CD4-positive, alpha-beta memory T cell (primary cell): ENCODE measurements at regions of chr5 and their contacts with region 1.

Region 1: DNA sequence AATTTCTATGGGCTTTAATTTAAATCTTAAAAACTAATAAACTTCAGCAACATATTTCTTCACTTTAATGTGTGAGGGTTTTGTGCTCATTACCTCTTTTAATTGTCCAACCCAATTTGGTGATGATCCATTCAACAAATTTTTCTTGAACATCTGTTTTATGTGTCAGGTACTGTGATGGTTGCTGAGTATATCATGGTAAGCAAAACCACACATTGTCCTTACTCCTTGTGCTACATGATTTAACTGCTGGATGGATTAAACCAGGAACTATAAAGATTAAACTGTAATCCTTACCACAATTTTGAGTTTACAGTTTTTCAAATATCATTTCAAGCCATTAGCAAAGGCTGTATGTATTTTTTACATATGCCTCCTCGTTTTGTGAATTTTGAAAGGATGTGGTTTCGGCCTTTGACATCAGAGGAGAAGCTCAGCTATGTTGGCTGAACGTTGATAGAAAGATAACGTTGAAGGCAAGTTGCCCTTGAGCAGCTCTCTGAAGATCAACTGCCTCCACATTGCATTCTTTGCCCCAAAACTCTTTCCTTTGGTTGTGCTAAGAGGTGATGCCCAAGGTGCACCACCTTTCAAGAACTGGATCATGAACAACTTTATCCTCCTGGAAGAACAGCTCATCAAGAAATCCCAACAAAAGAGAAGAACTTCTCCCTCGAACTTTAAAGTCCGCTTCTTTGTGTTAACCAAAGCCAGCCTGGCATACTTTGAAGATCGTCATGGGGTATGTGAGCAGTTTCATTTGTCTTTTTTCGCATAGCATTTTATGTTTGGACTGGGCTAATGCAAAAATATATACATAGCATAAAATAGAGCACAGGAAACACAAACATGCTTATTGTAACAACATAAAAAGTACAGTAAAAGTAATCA is at the start of gene ITK:
- DNase-seq: peak; percentile 77 to 85 (median 81)
- H3K4me3 ChIP-seq: peak within 1 kb of the TSS; percentile 83 to 99
- H3K4me3 Mint-ChIP-seq: peak within 1 kb of the TSS; percentile 97 to 100 (median 99)
- H3K27ac ChIP-seq: peak within 1 kb of the TSS; percentile 77
- H3K27ac Mint-ChIP-seq: peak within 1 kb of the TSS; percentile 84 to 99 (median 97)
- H3K4me1 ChIP-seq: peaks cover 47% of the 10 kb centered on the region
- H3K4me1 Mint-ChIP-seq: peaks cover 28 to 67% (median 43%) of the 10 kb centered on the region in 4 donors
- H3K27me3 ChIP-seq: no peaks in the 10 kb centered on the region
- H3K27me3 Mint-ChIP-seq: no peaks in the 10 kb centered on the region
- total RNA-seq, gene ITK: 398 to 421 TPM

Region 2: GRCh38 chr5:155794795-155795194 is 1385.8 kb before region 1 on chr5:
- CTCF ChIA-PET with region 1: no interaction called
- POLR2A ChIA-PET with region 1: no interaction called
- intact Hi-C with region 1: no loop called
- DNase-seq: no peak
- H3K4me3 ChIP-seq: no peak overlapping the region
- H3K4me3 Mint-ChIP-seq: no peak overlapping the region
- H3K27ac ChIP-seq: no peak overlapping the region
- H3K27ac Mint-ChIP-seq: no peak overlapping the region
- H3K4me1 ChIP-seq: no peaks in the 10 kb centered on the region
- H3K4me1 Mint-ChIP-seq: no peaks in the 10 kb centered on the region
- H3K27me3 ChIP-seq: no peaks in the 10 kb centered on the region
- H3K27me3 Mint-ChIP-seq: no peaks in the 10 kb centered on the region

Region 3: GRCh38 chr5:156835905-156836304 is 344.7 kb before region 1 on chr5:
- CTCF ChIA-PET with region 1: no interaction called
- POLR2A ChIA-PET with region 1: no interaction called
- intact Hi-C with region 1: no loop called
- DNase-seq: no peak
- H3K4me3 ChIP-seq: no peak overlapping the region
- H3K4me3 Mint-ChIP-seq: no peak overlapping the region
- H3K27ac ChIP-seq: no peak overlapping the region
- H3K27ac Mint-ChIP-seq: peak overlapping the region in 1 of 7 donors; percentile 4
- H3K4me1 ChIP-seq: no peaks in the 10 kb centered on the region
- H3K4me1 Mint-ChIP-seq: no peaks in the 10 kb centered on the region
- H3K27me3 ChIP-seq: no peaks in the 10 kb centered on the region
- H3K27me3 Mint-ChIP-seq: peaks cover 1 to 3% of the 10 kb centered on the region in 2 donors

Region 4: GRCh38 chr5:157108976-157109375 is 71.6 kb before region 1 on chr5 and contains the start of gene HAVCR2:
- CTCF ChIA-PET with region 1: no interaction called
- POLR2A ChIA-PET with region 1: no interaction called
- intact Hi-C with region 1: no loop called
- DNase-seq: peak; percentile 47 to 63 (median 54)
- H3K4me3 ChIP-seq: peak within 1 kb of the TSS; percentile 7 to 25
- H3K4me3 Mint-ChIP-seq: peak within 1 kb of the TSS; percentile 72 to 90 (median 86)
- H3K27ac ChIP-seq: peak within 1 kb of the TSS; percentile 12
- H3K27ac Mint-ChIP-seq: peak within 1 kb of the TSS; percentile 75 to 96 (median 92)
- H3K4me1 ChIP-seq: peaks cover 27% of the 10 kb centered on the region
- H3K4me1 Mint-ChIP-seq: peaks cover 20 to 49% (median 31%) of the 10 kb centered on the region in 4 donors
- H3K27me3 ChIP-seq: no peaks in the 10 kb centered on the region
- H3K27me3 Mint-ChIP-seq: no peaks in the 10 kb centered on the region
- total RNA-seq, gene HAVCR2: 2.7 to 4.5 TPM

Region 5: GRCh38 chr5:157159209-157159751 is 21.3 kb before region 1 on chr5:
- CTCF ChIA-PET with region 1: interaction called, 12 read pairs
- POLR2A ChIA-PET with region 1: interaction called, 171 read pairs
- intact Hi-C with region 1: loop called (anchors 1 kb)
- DNase-seq: peak; percentile 74 to 87 (median 81)
- H3K4me3 ChIP-seq: peak overlapping the region in 1 of 2 donors; percentile 31
- H3K4me3 Mint-ChIP-seq: peak overlapping the region in 7 of 8 donors; percentile 51 to 75 (median 65)
- H3K27ac ChIP-seq: peak overlapping the region; percentile 88
- H3K27ac Mint-ChIP-seq: peak overlapping the region; percentile 91 to 99 (median 98)
- H3K4me1 ChIP-seq: peaks cover 74% of the 10 kb centered on the region
- H3K4me1 Mint-ChIP-seq: peaks cover 57 to 91% (median 73%) of the 10 kb centered on the region in 4 donors
- H3K27me3 ChIP-seq: no peaks in the 10 kb centered on the region
- H3K27me3 Mint-ChIP-seq: no peaks in the 10 kb centered on the region

Region 6: DNA sequence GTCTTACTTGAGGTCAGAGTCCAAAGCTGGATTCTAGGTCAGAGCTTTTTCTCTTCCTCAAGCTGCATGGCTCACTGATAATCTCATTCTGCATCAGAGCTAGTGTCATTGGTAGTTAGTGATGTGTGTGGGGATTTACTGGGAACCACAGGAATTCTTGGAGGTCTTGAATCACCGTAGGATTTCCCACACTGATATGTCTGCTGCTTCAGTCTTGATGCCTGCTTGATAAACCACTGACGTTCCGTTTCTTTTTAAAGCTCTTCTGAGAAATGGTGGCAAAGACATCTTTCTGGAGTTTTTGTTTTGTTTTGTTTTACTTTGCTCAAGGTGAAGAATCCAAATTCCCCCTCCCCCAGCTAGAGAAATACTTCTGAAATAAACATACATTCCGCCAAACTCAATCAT is 13.4 kb before region 1 on chr5:
- CTCF ChIA-PET with region 1: interaction called, 14 read pairs
- POLR2A ChIA-PET with region 1: interaction called, 171 read pairs
- intact Hi-C with region 1: loop called (anchors 1 kb)
- DNase-seq: no peak
- H3K4me3 ChIP-seq: peak overlapping the region in 1 of 2 donors; percentile 12
- H3K4me3 Mint-ChIP-seq: peak overlapping the region; percentile 4 to 85 (median 67)
- H3K27ac ChIP-seq: peak overlapping the region; percentile 56
- H3K27ac Mint-ChIP-seq: peak overlapping the region; percentile 71 to 95 (median 80)
- H3K4me1 ChIP-seq: peaks cover 42% of the 10 kb centered on the region
- H3K4me1 Mint-ChIP-seq: peaks cover 42 to 85% (median 58%) of the 10 kb centered on the region in 4 donors
- H3K27me3 ChIP-seq: no peaks in the 10 kb centered on the region
- H3K27me3 Mint-ChIP-seq: no peaks in the 10 kb centered on the region

Region 7: GRCh38 chr5:157198277-157198986 is 17.8 kb after region 1 on chr5:
- CTCF ChIA-PET with region 1: interaction called, 6 read pairs
- POLR2A ChIA-PET with region 1: interaction called, 1,020 read pairs
- intact Hi-C with region 1: loop called (anchors 1 kb)
- DNase-seq: peak in 1 of 5 donors; percentile 91
- H3K4me3 ChIP-seq: peak overlapping the region in 1 of 2 donors; percentile 19
- H3K4me3 Mint-ChIP-seq: peak overlapping the region; percentile 68 to 86 (median 72)
- H3K27ac ChIP-seq: peak overlapping the region; percentile 64
- H3K27ac Mint-ChIP-seq: peak overlapping the region; percentile 84 to 96 (median 92)
- H3K4me1 ChIP-seq: peaks cover 99% of the 10 kb centered on the region
- H3K4me1 Mint-ChIP-seq: peaks cover 73 to 96% (median 84%) of the 10 kb centered on the region in 4 donors
- H3K27me3 ChIP-seq: no peaks in the 10 kb centered on the region
- H3K27me3 Mint-ChIP-seq: no peaks in the 10 kb centered on the region

Region 8: DNA sequence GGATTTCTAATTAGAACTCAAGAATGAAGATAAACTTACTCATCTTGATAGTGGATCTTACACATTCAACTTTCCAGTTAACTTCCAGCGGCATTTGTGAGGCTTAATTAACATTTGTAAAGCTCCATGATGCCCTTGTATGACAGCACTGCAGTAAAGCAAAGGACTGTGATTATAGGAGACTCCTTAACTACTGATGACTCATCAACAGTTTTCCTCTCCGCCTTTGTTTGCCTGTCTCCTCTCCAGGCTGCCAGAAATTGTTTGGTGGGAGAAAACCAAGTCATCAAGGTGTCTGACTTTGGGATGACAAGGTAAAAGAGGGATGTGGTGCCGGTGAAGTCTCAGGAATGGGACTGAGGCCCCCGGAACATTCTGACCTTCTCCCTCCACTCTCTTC is 64.9 kb after region 1 on chr5:
- CTCF ChIA-PET with region 1: interaction called, 4 read pairs
- POLR2A ChIA-PET with region 1: interaction called, 123 read pairs
- intact Hi-C with region 1: loop called (anchors 2 kb)
- DNase-seq: no peak
- H3K4me3 ChIP-seq: no peak overlapping the region
- H3K4me3 Mint-ChIP-seq: peak overlapping the region in 2 of 8 donors; percentile 17
- H3K27ac ChIP-seq: peak overlapping the region; percentile 1
- H3K27ac Mint-ChIP-seq: peak overlapping the region; percentile 43 to 95 (median 76)
- H3K4me1 ChIP-seq: peaks cover 90% of the 10 kb centered on the region
- H3K4me1 Mint-ChIP-seq: peaks cover 55 to 84% (median 68%) of the 10 kb centered on the region in 4 donors
- H3K27me3 ChIP-seq: no peaks in the 10 kb centered on the region
- H3K27me3 Mint-ChIP-seq: no peaks in the 10 kb centered on the region